Activated T-helper 2 cell treated with anti-CD3 and anti-CD28 coated beads, Interferon-gamma antibody, Interleukin-2, Interleukin-4, amounts not matched to agents 10 μg/mL and 5 μg/mL and 100 μg/mL, durations not matched to agents 14 hours and 24 hours and 36 hours (primary cell): ENCODE measurements at regions of chr22 and their contacts with region 1.

Region 1: GRCh38 chr22:37817705-37818408 is 5.3 kb upstream of the GALR3 start:
- DNase-seq: peak; percentile 73
- H3K4me3 Mint-ChIP-seq: no peak overlapping the region
- H3K27ac Mint-ChIP-seq: no peak overlapping the region
- H3K4me1 Mint-ChIP-seq: peaks cover 11% of the 10 kb centered on the region
- H3K27me3 Mint-ChIP-seq: peaks cover 22% of the 10 kb centered on the region

Region 2: GRCh38 chr22:37849089-37849751 is 31.4 kb after region 1 on chr22 and contains the start of gene EIF3L:
- intact Hi-C with region 1: loop called (anchors 2 kb)
- DNase-seq: peak; percentile 89
- H3K4me3 Mint-ChIP-seq: peak within 1 kb of the TSS; percentile 94
- H3K27ac Mint-ChIP-seq: peak within 1 kb of the TSS; percentile 97
- H3K4me1 Mint-ChIP-seq: peaks cover 38% of the 10 kb centered on the region
- H3K27me3 Mint-ChIP-seq: no peaks in the 10 kb centered on the region
- total RNA-seq, gene EIF3L: 462 and 480 TPM in 2 replicates

Region 3: DNA sequence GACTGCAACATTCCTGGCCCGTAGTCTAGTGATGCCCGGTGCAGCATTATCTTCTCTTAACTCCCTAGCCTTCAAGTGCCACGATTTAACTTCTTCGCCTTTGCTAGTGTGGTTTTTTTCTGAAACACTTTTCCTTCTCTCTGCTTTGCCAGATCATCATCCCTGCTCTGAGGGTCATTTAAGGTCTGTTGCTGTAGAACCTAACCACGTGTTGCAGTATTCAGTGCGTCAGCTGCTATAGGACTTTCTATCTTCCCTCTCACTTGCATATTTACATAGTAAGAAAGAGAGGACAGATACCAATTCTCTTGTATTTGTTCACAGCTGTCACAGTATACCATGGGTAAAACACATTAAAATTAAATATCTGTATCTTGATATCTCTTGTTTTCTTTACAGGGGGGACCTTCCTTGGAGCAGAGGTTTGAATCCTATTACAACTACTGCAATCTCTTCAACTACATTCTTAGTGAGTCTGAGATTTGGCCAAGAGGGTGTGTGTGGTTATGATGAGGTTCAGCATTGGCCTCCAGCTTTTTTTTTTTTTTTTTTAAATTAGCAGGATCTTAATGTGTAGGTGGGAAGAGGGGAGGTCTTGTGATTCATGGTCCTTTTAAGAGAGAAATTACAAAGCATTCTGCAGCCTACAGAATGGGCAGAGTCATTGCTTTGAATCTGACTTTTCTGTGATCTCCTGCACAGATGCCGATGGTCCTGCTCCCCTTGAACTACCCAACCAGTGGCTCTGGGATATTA is 44.9 kb after region 1 on chr22:
- intact Hi-C with region 1: loop called (anchors 1 kb)
- DNase-seq: no peak
- H3K4me3 Mint-ChIP-seq: no peak overlapping the region
- H3K27ac Mint-ChIP-seq: no peak overlapping the region
- H3K4me1 Mint-ChIP-seq: peaks cover 10% of the 10 kb centered on the region
- H3K27me3 Mint-ChIP-seq: no peaks in the 10 kb centered on the region

Region 4: GRCh38 chr22:37887610-37888378 is 69.9 kb after region 1 on chr22:
- intact Hi-C with region 1: no loop called
- DNase-seq: no peak
- H3K4me3 Mint-ChIP-seq: no peak overlapping the region
- H3K27ac Mint-ChIP-seq: no peak overlapping the region
- H3K4me1 Mint-ChIP-seq: peaks cover 1% of the 10 kb centered on the region
- H3K27me3 Mint-ChIP-seq: no peaks in the 10 kb centered on the region